ENCODE measurements at regions of chr9 and their contacts with region 1.

Region 1: GRCh38 chr9:137070201-137070905 is at the start of gene SAPCD2:
- DNase-seq: peak; percentile 88
- ATAC-seq: peak; percentile 82
- H3K4me3 ChIP-seq: peak within 1 kb of the TSS; percentile 84
- H3K27ac ChIP-seq: no peak within 1 kb of the TSS
- H3K4me1 ChIP-seq: peaks cover 20% of the 10 kb centered on the region
- H3K27me3 ChIP-seq: no peaks in the 10 kb centered on the region
- CTCF ChIP-seq: no peak
- total RNA-seq, gene SAPCD2: 98.4 and 134 TPM in 2 replicates

Region 2: DNA sequence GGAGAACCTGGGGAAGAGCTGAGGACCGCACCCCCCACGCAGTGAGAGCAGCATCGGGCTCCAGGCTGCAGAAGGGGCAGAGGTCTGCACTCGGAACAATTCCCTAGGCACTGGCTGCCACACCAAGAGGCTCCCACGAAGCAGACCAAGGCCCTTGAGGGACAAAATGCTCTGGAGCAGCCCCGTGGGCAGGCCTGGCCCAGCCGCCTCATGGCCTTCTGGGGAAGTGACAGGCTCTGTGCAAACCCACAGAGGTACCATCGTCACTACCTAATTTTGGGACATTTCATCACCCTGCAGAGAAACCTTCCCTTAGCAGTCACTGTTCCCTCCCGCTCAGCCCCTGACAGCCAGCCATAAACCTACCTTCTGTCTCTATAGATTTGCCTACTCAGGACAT is 141.8 kb before region 1 on chr9:
- CTCF ChIA-PET with region 1: no interaction called
- POLR2A ChIA-PET with region 1: no interaction called
- intact Hi-C with region 1: no loop called
- DNase-seq: no peak
- ATAC-seq: no peak
- H3K4me3 ChIP-seq: no peak overlapping the region
- H3K27ac ChIP-seq: no peak overlapping the region
- H3K4me1 ChIP-seq: no peaks in the 10 kb centered on the region
- H3K27me3 ChIP-seq: no peaks in the 10 kb centered on the region
- CTCF ChIP-seq: no peak

Region 3: DNA sequence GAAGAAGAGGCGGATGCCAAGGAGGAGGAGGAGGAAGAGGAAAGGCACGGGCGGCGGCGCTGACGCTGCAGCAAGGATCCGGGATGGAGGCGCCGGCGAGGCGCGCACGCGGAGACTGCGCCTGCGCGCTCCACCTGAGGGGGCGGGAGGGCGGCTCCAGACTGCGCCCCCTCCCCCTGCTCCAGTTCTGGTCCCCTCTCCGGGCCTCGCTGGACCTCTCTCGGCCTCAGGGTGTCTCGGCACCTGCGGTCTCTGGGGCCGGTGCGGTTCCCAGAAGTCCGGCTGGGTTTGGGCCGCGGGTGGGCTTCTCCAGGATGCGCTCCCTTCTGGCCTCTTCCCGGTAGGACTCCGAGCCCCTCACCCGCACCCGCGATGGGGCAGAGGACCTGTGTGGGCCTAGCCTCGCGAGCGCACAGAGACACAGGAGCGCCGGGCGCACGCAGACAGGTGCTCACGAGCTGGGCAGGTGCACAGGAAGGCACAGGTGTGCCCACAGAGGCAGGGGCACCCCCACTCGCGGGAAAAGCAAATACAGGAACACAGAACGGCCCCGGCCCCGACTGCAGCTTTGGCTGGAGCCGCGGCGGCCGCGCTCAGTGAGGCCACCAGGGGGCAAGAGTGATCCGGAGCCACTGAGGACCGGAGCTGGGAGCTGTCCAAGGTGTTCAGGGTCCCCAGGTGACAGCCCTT is 24.1 kb before region 1 on chr9 and contains the start of gene NPDC1:
- CTCF ChIA-PET with region 1: interaction called, 12 read pairs
- POLR2A ChIA-PET with region 1: interaction called, 20 read pairs
- intact Hi-C with region 1: loop called (anchors 2 kb)
- DNase-seq: peak; percentile 78
- ATAC-seq: peak; percentile 31
- H3K4me3 ChIP-seq: peak within 1 kb of the TSS; percentile 84
- H3K27ac ChIP-seq: no peak within 1 kb of the TSS
- H3K4me1 ChIP-seq: peaks cover 9% of the 10 kb centered on the region; the same call in 1 of the 2 replicates
- H3K27me3 ChIP-seq: no peaks in the 10 kb centered on the region
- CTCF ChIP-seq: peak; percentile 74
- total RNA-seq, gene NPDC1: 25.4 and 33.3 TPM in 2 replicates

Region 4: DNA sequence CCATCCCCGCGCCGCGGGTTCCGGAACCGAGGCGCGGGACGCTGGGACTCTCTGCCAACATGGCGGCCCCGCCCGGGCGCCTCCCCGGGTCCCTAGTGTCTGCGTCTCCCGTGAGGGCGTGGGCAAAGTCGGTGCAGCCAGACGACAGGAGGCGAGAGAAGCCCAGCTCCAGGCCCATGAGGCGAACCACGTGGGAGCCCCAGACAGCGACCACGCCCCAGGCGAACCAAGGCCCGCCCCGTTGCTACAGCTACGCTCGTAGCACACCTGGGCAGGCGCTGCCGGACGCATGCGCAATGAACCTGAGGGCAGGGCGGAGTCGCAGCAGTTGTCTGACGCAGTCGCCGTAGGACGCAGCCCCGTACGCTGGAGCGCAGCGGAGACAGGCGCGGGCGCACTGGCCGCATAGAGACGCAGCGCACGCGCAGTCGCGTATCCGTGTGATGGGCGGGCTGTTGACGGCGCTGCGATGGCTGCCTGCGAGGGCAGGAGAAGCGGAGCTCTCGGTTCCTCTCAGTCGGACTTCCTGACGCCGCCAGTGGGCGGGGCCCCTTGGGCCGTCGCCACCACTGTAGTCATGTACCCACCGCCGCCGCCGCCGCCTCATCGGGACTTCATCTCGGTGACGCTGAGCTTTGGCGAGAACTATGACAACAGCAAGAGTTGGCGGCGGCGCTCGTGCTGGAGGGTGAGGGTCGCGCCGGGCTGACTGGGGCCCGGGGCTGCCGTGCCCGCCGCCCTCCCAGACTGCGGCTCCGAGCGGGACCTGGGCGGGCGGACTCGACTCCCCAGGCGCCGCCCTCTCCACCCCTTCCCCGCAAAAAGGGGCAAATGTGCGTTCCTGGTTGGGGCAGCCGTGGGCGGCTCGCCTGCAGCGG is 16.4 kb after region 1 on chr9 and contains the start of gene MAN1B1:
- CTCF ChIA-PET with region 1: interaction called, 4 read pairs
- POLR2A ChIA-PET with region 1: interaction called, 32 read pairs
- intact Hi-C with region 1: loop called (anchors 1 kb)
- DNase-seq: peak; percentile 98
- ATAC-seq: peak; percentile 82
- H3K4me3 ChIP-seq: peak within 1 kb of the TSS; percentile 79
- H3K27ac ChIP-seq: peak within 1 kb of the TSS; percentile 94
- H3K4me1 ChIP-seq: peaks cover 37% of the 10 kb centered on the region
- H3K27me3 ChIP-seq: no peaks in the 10 kb centered on the region
- CTCF ChIP-seq: no peak
- total RNA-seq, gene MAN1B1: 65.5 and 71.6 TPM in 2 replicates

Region 5: DNA sequence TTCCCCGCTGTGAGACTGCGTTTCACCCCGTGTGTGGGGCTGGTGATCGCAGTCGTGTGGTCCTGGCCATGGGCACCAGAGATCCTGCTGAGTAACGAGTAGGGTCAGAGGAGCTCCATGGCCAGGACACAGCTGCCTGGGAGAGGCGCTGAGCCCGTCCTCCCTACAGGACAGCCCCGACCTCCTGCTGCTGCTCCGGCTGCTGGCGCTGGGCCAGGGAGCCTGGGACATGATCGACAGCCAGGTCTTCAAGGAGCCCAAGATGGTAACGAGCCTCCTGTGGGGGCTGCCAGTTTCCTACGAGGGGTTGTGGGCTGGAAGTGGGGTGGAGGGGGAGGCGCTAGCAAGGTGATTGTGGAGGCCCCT is 195.8 kb after region 1 on chr9:
- CTCF ChIA-PET with region 1: no interaction called
- POLR2A ChIA-PET with region 1: no interaction called
- intact Hi-C with region 1: no loop called
- DNase-seq: no peak
- ATAC-seq: no peak
- H3K4me3 ChIP-seq: no peak overlapping the region
- H3K27ac ChIP-seq: no peak overlapping the region
- H3K4me1 ChIP-seq: no peaks in the 10 kb centered on the region
- H3K27me3 ChIP-seq: no peaks in the 10 kb centered on the region
- CTCF ChIP-seq: no peak

Region 6: GRCh38 chr9:137295238-137295811 is 225.0 kb after region 1 on chr9:
- CTCF ChIA-PET with region 1: no interaction called
- POLR2A ChIA-PET with region 1: no interaction called
- intact Hi-C with region 1: no loop called
- DNase-seq: peak; percentile 41
- ATAC-seq: peak; percentile 45
- H3K4me3 ChIP-seq: no peak overlapping the region
- H3K27ac ChIP-seq: no peak overlapping the region
- H3K4me1 ChIP-seq: peaks cover 7% of the 10 kb centered on the region; the same call in 1 of the 2 replicates
- H3K27me3 ChIP-seq: no peaks in the 10 kb centered on the region
- CTCF ChIP-seq: no peak

Measured in PC-3 (cell line).